Activated CD4-positive, alpha-beta T cell treated with anti-CD3 and anti-CD28 coated beads, Interleukin-2, amount 10 ng/mL, durations not matched to agents 7 days and 5 days (primary cell): ENCODE measurements at regions of chr2 and their contacts with region 1.

Region 1: GRCh38 chr2:130797493-130798435 is 39.0 kb upstream of the ARHGEF4 start:
- DNase-seq: peak; percentile 91
- H3K4me3 Mint-ChIP-seq: peak overlapping the region; percentile 59
- H3K27ac Mint-ChIP-seq: peak overlapping the region; percentile 75
- H3K4me1 Mint-ChIP-seq: peaks cover 3% of the 10 kb centered on the region
- H3K27me3 Mint-ChIP-seq: peaks cover 7% of the 10 kb centered on the region

Region 2: DNA sequence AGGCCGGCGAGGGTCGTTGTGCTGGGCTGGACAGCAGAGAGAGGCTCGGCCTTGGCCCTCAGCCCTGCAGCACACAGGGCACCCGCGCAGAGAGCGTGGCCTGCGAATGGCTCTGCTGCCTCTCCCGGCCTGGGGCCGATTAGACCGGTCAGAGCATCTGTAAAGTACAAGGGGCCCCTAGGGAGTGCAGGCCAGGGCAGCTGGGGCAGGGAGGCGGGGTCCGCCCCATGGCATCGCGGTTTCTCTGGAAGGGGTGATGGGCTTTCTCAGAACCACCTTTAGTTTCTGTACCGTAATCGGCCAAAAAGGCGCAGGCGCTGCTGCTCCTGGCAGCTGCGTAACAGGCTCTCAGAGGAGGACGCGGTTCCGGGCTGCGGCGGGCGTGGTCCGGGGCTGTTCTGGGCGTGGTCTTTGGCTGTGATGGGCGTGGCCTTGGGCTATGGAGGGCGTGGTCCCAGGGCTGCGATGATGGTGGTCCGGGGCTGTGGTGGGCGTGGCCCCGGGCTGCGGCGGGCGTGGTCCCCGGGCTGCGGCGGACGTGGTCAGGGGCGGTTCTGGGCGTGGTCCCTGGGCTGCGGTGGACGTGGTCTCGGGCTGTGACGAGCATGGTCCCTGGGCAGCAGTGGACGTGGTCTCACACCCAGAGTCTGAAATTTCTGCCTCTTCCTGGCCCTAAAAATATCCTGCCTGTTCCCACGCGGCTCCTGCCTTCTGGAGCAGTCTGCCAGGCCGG is 70.3 kb before region 1 on chr2:
- CTCF ChIA-PET with region 1: interaction called, 16 read pairs
- POLR2A ChIA-PET with region 1: no interaction called
- DNase-seq: peak; percentile 86
- H3K4me3 Mint-ChIP-seq: peak overlapping the region; percentile 69
- H3K27ac Mint-ChIP-seq: peak overlapping the region; percentile 76
- H3K4me1 Mint-ChIP-seq: peaks cover 7% of the 10 kb centered on the region
- H3K27me3 Mint-ChIP-seq: peaks cover 14% of the 10 kb centered on the region

Region 3: GRCh38 chr2:130814931-130815680 is 17.3 kb after region 1 on chr2:
- CTCF ChIA-PET with region 1: interaction called, 10 read pairs
- POLR2A ChIA-PET with region 1: no interaction called
- DNase-seq: no peak
- H3K4me3 Mint-ChIP-seq: no peak overlapping the region
- H3K27ac Mint-ChIP-seq: no peak overlapping the region
- H3K4me1 Mint-ChIP-seq: no peaks in the 10 kb centered on the region
- H3K27me3 Mint-ChIP-seq: peaks cover 24% of the 10 kb centered on the region

Region 4: DNA sequence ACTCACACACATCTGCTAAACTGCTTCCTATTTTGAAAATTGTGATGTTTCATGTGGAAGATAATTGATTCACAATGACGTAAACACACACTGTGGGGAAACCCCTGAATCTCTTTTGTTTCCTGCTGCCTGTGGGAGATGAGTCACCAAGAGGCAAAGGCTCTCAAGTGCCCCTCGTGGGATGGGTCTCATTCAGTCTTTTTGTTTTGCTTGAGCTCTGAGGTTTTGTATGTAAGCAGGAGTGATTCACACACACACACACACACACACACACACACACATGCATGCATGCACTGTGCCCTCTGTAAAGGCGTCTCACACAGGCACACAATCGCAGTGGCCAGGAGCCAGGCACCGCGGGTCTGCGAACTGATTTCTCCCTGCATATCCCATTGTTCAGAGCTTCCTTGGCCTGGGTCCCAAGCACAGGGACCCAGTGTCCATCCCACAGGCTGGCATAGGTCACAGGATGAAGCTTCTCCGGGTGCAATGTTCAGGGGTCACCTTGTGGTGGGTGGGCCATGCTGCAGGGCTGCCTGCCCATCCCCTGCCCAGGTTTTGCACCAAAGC is 26.8 kb after region 1 on chr2:
- CTCF ChIA-PET with region 1: interaction called, 15 read pairs
- POLR2A ChIA-PET with region 1: no interaction called
- DNase-seq: peak; percentile 77
- H3K4me3 Mint-ChIP-seq: no peak overlapping the region
- H3K27ac Mint-ChIP-seq: peak overlapping the region; percentile 81
- H3K4me1 Mint-ChIP-seq: peaks cover 17% of the 10 kb centered on the region
- H3K27me3 Mint-ChIP-seq: peaks cover 6% of the 10 kb centered on the region

Region 5: GRCh38 chr2:130873700-130874346 is 76.1 kb after region 1 on chr2:
- CTCF ChIA-PET with region 1: interaction called, 114 read pairs
- POLR2A ChIA-PET with region 1: interaction called, 5 read pairs
- DNase-seq: peak; percentile 78
- H3K4me3 Mint-ChIP-seq: no peak overlapping the region
- H3K27ac Mint-ChIP-seq: no peak overlapping the region
- H3K4me1 Mint-ChIP-seq: no peaks in the 10 kb centered on the region
- H3K27me3 Mint-ChIP-seq: peaks cover 13% of the 10 kb centered on the region

Region 6: DNA sequence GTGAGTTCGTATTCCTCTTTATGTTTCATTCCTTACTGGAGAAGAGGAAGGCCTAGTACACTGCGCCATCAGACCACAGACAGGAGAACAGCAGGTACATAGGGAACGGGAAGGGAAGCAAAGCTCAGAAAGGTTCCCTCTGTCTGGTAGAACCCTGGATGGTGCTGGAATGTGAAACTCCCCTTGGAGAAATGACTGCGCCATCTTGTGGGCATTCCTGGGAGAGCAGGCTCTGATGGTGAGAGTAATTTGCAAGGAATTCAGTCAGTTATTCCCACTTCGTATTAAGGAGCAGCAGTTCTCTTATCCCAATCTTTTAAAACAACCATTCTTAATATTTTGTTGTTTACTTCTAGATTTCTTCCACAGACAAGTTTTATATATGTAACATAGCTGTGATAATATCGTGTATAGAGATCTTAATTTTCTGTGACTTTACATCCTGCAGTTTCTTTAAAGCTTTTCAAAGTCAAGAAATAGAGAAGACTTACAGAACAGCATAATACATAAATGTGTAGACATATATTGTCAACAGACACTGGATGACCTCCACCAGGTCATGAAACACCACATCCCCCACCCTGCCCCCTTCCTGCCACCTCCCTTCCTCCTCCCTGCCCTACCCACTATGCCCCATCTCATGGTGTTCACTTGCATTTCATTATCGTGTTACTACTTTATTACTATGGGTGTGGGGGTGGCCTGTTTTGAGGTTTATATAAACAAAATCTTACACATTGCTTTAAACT is 122.8 kb after region 1 on chr2:
- CTCF ChIA-PET with region 1: interaction called, 11 read pairs
- POLR2A ChIA-PET with region 1: no interaction called
- DNase-seq: peak; percentile 50
- H3K4me3 Mint-ChIP-seq: no peak overlapping the region
- H3K27ac Mint-ChIP-seq: no peak overlapping the region
- H3K4me1 Mint-ChIP-seq: no peaks in the 10 kb centered on the region
- H3K27me3 Mint-ChIP-seq: peaks cover 7% of the 10 kb centered on the region